Right ventricle myocardium inferior (tissue), 1 donor: ENCODE measurements at regions of chr11 and their contacts with region 1.

Region 1: DNA sequence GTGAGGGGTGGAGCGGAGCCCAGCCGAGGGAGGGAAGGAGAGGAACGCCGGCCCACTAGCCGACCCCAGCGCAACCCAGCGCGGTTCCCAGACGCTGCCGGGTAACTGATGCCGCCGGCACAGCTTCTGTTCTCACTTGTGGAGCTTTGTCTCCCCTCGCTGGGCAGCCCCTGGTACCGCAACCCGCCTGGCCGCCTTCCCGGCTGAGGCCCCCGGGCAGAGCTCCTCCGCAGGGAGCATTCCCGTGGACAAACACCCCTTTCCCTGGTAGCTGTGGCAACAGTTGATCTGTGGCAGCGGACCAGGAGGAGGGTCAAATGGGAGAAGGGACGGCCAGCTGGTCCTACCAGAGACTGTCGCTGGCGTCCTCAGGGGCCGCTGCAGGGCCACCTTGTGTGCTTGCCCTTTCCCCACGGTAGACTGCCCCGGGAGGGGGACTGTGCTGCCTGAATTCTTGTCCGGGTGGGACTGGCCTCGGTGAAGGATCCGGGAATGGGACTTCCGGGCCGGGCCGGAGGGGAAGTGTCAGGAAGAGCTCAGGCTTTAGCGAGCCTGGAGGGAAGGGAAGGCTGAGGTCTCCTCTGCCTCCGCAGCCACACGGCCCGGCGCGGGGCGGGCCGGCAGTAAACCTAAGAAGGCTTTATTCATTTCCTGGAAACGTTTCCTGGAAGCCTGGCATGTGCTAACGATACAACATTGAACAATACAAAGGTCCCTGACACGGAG is 468.0 kb downstream of the OPCML start:
- DNase-seq: peak; percentile 77
- ATAC-seq: peak; percentile 95

Region 2: DNA sequence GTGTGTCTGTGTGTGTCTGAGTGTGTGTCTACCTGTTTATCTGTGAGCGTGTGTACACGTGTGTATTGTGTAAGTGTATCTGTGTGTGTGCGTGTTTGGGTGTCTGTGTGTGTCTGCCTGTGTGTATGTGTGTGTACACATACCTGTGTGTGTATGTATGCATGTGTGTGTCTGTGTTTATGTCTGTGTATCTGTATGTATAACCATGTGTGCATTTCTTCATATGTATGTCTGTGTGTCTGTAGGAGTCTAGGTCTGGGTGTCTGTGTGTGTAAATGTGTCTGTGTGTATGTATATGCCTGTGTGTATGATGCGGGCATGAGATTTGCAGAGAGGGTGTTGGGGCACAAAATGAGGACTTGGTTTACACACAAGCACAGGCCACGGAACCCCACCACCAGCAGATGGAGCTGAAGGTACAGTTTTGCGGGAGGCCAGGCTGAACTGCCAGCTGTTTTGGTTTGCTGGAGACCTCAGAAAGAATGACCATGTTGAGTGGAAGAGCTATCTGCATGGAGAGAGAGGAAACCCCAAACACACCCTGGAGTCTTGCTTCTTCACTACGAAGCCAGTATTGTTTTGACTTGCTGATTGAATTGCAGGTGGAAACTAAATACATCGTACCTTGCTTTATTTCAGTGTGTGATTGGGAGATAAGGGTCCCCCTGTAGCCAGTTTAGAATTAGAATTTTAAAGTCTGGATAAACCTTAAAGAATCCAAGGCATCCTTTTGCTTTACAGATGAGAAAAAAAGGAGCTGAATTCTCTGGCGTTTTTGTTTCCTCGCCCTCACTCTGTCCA is 1196.7 kb before region 1 on chr11:
- intact Hi-C with region 1: loop called (anchors 10 kb)
- DNase-seq: peak; percentile 76
- ATAC-seq: peak; percentile 80

Region 3: GRCh38 chr11:132114185-132114584 is 950.1 kb before region 1 on chr11:
- intact Hi-C with region 1: loop called (anchors 5 kb)
- DNase-seq: no peak
- ATAC-seq: no peak

Region 4: DNA sequence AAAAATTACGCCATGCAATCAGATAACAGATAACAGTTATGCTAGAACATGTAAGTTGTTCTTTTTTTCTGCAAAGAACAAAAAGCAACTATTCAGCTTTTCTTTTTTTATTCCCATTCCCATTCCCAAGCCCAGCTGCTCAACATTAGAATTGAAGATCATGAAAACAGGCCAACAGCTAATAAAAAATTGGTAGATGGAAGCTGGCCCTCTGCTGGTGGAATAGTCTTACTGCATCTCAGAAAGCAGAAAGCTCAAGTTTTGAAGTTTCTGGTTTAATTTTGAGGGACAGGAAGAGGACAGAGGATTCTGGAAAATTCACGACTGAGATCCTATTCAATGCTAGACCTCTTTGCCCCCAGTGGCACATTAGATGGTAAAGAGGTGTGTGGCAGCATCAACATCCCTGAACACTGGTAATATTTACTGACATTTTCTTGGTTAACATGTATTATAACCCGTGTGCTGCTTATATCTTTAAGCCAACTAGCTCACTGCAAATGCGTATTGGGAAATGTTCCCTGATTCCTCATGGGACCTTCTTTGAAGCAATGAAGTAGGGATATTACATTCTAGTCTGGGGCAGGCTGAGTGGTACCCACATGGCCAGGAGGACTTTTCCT is 123.2 kb before region 1 on chr11:
- intact Hi-C with region 1: loop called (anchors 10 kb)
- DNase-seq: no peak
- ATAC-seq: no peak